ENCODE measurements at regions of chr4 and their contacts with region 1.

Region 1: GRCh38 chr4:143335979-143336780 is 496 bp upstream of the GAB1 start:
- DNase-seq: peak; percentile 93 to 97 (median 97)
- ATAC-seq: peak; percentile 95
- H3K4me3 ChIP-seq: peak overlapping the region; percentile 87
- H3K27ac ChIP-seq: peak overlapping the region; percentile 92
- H3K4me1 ChIP-seq: no peaks in the 10 kb centered on the region
- H3K27me3 ChIP-seq: no peaks in the 10 kb centered on the region

Region 2: GRCh38 chr4:143207557-143207956 is 128.6 kb before region 1 on chr4:
- intact Hi-C with region 1: loop called in 3 of 4 experiments (anchors 5 to 10 kb)
- DNase-seq: no peak
- ATAC-seq: peak; percentile 62 to 63
- H3K4me3 ChIP-seq: no peak overlapping the region
- H3K27ac ChIP-seq: no peak overlapping the region
- H3K4me1 ChIP-seq: no peaks in the 10 kb centered on the region
- H3K27me3 ChIP-seq: no peaks in the 10 kb centered on the region

Region 3: GRCh38 chr4:143215873-143216272 is 120.3 kb before region 1 on chr4:
- intact Hi-C with region 1: loop called in 1 of 4 experiments (anchors 10 kb)
- DNase-seq: no peak
- ATAC-seq: peak in 1 of 2 donors; percentile 41
- H3K4me3 ChIP-seq: no peak overlapping the region
- H3K27ac ChIP-seq: no peak overlapping the region
- H3K4me1 ChIP-seq: no peaks in the 10 kb centered on the region
- H3K27me3 ChIP-seq: no peaks in the 10 kb centered on the region

Region 4: DNA sequence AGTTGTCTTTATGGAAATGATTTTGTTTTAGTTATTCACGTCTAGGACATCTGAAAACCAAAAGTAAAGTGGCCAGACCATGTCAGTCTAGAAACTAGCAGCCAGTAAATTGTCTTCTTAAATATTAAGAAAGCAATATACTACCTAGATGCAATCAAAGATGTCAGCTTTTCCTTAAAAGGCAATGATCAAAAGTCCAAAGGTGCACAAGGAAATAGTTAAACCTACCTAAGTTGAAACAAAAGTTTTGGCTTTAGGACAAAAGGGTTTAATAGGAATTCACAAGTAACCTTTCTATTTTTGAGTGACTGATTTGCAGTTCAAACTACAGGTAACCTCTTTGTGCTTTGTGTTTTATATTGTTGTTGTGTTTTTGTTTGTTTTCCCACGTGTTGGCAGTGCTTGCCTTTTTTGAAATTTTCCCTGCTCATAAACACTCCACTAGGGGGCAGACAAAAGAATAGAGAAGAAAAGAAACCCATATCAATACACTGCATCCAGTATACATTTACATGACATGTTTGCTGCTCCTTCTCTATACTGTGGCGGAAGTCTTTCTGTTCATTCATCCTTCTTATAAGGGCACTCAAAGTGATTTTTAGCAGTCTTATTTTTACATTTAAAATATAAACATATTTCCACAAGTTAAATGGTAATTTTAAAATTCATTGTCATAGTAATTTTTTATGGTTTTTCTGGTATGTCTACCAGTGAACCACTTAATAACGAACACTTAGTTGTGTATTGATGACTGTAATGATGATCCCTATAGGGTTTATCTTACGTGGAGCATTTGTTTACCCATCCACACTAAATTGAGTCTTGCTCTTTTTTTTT is 63.2 kb after region 1 on chr4:
- intact Hi-C with region 1: loop called in 1 of 4 experiments (anchors 10 kb)
- DNase-seq: no peak
- ATAC-seq: no peak
- H3K4me3 ChIP-seq: no peak overlapping the region
- H3K27ac ChIP-seq: no peak overlapping the region
- H3K4me1 ChIP-seq: peaks cover 10% of the 10 kb centered on the region
- H3K27me3 ChIP-seq: no peaks in the 10 kb centered on the region

Region 5: DNA sequence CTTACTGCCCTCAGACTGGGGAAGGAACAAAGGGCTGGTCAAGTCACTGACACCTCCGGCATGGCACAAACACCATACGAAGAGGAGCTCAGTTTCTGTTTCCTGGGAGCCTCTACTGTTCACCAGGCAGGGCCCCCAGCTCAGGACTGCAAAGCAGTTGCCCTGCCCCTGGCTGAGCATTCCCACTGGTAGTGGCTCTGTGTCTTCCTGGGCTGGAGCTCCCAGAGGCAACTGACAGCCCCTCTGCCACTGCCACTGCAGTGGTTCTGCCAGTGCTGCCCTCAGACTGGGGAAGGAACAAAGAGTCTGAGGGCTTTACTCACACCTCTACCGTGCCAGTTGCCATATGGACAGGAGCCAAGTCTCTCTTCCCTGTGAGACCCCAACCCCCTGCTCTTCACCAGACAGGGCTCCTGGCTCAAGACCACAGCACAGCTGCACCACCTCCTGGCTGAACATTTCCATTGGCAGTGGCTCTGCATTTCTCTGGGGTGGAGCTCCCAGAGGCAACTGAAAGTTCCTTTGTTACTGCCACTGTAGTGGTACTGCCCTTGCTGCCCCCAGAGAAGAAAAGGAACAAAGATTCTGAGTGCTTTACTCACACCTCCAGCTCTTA is 245.3 kb after region 1 on chr4:
- intact Hi-C with region 1: no loop called
- DNase-seq: no peak
- ATAC-seq: no peak
- H3K4me3 ChIP-seq: no peak overlapping the region
- H3K27ac ChIP-seq: no peak overlapping the region
- H3K4me1 ChIP-seq: peaks cover 3% of the 10 kb centered on the region
- H3K27me3 ChIP-seq: no peaks in the 10 kb centered on the region

Region 6: GRCh38 chr4:143679434-143679833 is 343.3 kb after region 1 on chr4:
- intact Hi-C with region 1: no loop called
- DNase-seq: no peak
- ATAC-seq: no peak
- H3K4me3 ChIP-seq: no peak overlapping the region
- H3K27ac ChIP-seq: no peak overlapping the region
- H3K4me1 ChIP-seq: no peaks in the 10 kb centered on the region
- H3K27me3 ChIP-seq: no peaks in the 10 kb centered on the region